Calu3 (cell line): ENCODE measurements at regions of chr6 and their contacts with region 1.

Region 1: GRCh38 chr6:52419809-52420670 is at the start of gene EFHC1:
- DNase-seq: peak; percentile 98
- H3K4me3 Mint-ChIP-seq: no peak within 1 kb of the TSS
- H3K27ac Mint-ChIP-seq: no peak within 1 kb of the TSS
- H3K4me1 Mint-ChIP-seq: peaks cover 39% of the 10 kb centered on the region
- H3K27me3 Mint-ChIP-seq: no peaks in the 10 kb centered on the region
- CTCF ChIP-seq: no peak
- total RNA-seq, gene EFHC1: 18.1 and 25.6 TPM in 2 replicates

Region 2: GRCh38 chr6:52155791-52156576 is 264.1 kb before region 1 on chr6:
- CTCF ChIA-PET with region 1: no interaction called
- intact Hi-C with region 1: no loop called
- DNase-seq: peak; percentile 52
- H3K4me3 Mint-ChIP-seq: peak overlapping the region; percentile 53
- H3K27ac Mint-ChIP-seq: peak overlapping the region; percentile 94
- H3K4me1 Mint-ChIP-seq: peaks cover 48% of the 10 kb centered on the region
- H3K27me3 Mint-ChIP-seq: no peaks in the 10 kb centered on the region
- CTCF ChIP-seq: no peak

Region 3: GRCh38 chr6:52371656-52372191 is 48.3 kb before region 1 on chr6:
- CTCF ChIA-PET with region 1: no interaction called
- intact Hi-C with region 1: no loop called
- DNase-seq: no peak
- H3K4me3 Mint-ChIP-seq: no peak overlapping the region
- H3K27ac Mint-ChIP-seq: no peak overlapping the region
- H3K4me1 Mint-ChIP-seq: peaks cover 40% of the 10 kb centered on the region
- H3K27me3 Mint-ChIP-seq: no peaks in the 10 kb centered on the region
- CTCF ChIP-seq: no peak

Region 4: GRCh38 chr6:52503848-52504781 is 84.1 kb after region 1 on chr6:
- CTCF ChIA-PET with region 1: interaction called, 4 read pairs
- intact Hi-C with region 1: loop called (anchors 2 kb)
- DNase-seq: peak; percentile 99
- H3K4me3 Mint-ChIP-seq: peak overlapping the region; percentile 28
- H3K27ac Mint-ChIP-seq: peak overlapping the region; percentile 25
- H3K4me1 Mint-ChIP-seq: peaks cover 40% of the 10 kb centered on the region
- H3K27me3 Mint-ChIP-seq: no peaks in the 10 kb centered on the region
- CTCF ChIP-seq: no peak

Region 5: DNA sequence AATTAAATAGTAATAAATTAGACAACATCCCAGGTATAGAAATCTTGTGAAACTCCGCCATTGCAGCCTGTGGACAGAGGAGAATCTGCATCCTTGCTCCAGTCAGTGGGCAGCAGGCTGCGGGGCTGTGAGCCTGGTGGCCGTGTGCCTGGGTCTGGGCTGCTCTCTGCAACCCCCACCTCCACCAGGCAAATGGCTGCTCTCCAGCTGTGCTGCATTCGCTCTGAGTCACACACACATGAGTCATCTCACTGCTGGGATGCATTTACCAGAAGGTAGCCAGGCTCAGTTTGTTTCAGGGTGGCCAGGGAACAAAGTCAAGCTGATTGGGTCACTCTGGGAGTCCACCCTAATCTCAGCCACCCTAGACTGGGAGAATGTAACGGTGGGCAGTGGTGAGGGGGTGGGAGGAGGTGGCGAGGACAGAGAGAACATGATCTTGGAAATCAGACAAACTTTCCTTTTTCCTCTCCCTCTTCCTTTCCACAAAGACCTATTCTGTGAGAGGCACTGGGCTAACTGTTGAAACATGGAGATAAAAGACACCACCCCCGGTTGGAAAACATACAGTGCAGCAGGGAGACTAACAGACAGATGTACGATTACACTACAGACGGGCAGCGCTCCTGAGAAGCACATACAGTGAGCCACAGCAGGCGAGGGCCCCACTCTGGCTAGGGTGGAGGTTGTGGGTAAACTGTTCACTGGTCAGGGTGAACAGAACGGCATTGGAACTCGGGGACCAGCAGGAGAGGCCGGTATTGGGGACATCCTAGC is 97.7 kb after region 1 on chr6:
- CTCF ChIA-PET with region 1: no interaction called
- intact Hi-C with region 1: no loop called
- DNase-seq: peak; percentile 76
- H3K4me3 Mint-ChIP-seq: no peak overlapping the region
- H3K27ac Mint-ChIP-seq: peak overlapping the region; percentile 78
- H3K4me1 Mint-ChIP-seq: peaks cover 56% of the 10 kb centered on the region
- H3K27me3 Mint-ChIP-seq: no peaks in the 10 kb centered on the region
- CTCF ChIP-seq: no peak

Region 6: GRCh38 chr6:52564856-52565255 is 144.8 kb after region 1 on chr6:
- CTCF ChIA-PET with region 1: no interaction called
- intact Hi-C with region 1: no loop called
- DNase-seq: no peak
- H3K4me3 Mint-ChIP-seq: no peak overlapping the region
- H3K27ac Mint-ChIP-seq: no peak overlapping the region
- H3K4me1 Mint-ChIP-seq: no peaks in the 10 kb centered on the region
- H3K27me3 Mint-ChIP-seq: no peaks in the 10 kb centered on the region
- CTCF ChIP-seq: no peak

Region 7: GRCh38 chr6:52577022-52577777 is 157.2 kb after region 1 on chr6 and contains the start of gene TRAM2:
- CTCF ChIA-PET with region 1: interaction called, 7 read pairs
- intact Hi-C with region 1: loop called (anchors 5 kb)
- DNase-seq: peak; percentile 89
- H3K4me3 Mint-ChIP-seq: peak within 1 kb of the TSS; percentile 67
- H3K27ac Mint-ChIP-seq: peak within 1 kb of the TSS; percentile 40
- H3K4me1 Mint-ChIP-seq: peaks cover 36% of the 10 kb centered on the region
- H3K27me3 Mint-ChIP-seq: no peaks in the 10 kb centered on the region
- CTCF ChIP-seq: no peak
- total RNA-seq, gene TRAM2: 10.7 and 12.8 TPM in 2 replicates

Region 8: GRCh38 chr6:52598123-52598823 is 178.2 kb after region 1 on chr6:
- CTCF ChIA-PET with region 1: interaction called, 7 read pairs
- intact Hi-C with region 1: loop called (anchors 1 kb)
- DNase-seq: peak; percentile 79
- H3K4me3 Mint-ChIP-seq: peak overlapping the region; percentile 2
- H3K27ac Mint-ChIP-seq: no peak overlapping the region
- H3K4me1 Mint-ChIP-seq: peaks cover 21% of the 10 kb centered on the region
- H3K27me3 Mint-ChIP-seq: peaks cover 13% of the 10 kb centered on the region
- CTCF ChIP-seq: peak; percentile 68